MCF 10A (cell line): ENCODE measurements at regions of chr7 and their contacts with region 1.

Region 1: DNA sequence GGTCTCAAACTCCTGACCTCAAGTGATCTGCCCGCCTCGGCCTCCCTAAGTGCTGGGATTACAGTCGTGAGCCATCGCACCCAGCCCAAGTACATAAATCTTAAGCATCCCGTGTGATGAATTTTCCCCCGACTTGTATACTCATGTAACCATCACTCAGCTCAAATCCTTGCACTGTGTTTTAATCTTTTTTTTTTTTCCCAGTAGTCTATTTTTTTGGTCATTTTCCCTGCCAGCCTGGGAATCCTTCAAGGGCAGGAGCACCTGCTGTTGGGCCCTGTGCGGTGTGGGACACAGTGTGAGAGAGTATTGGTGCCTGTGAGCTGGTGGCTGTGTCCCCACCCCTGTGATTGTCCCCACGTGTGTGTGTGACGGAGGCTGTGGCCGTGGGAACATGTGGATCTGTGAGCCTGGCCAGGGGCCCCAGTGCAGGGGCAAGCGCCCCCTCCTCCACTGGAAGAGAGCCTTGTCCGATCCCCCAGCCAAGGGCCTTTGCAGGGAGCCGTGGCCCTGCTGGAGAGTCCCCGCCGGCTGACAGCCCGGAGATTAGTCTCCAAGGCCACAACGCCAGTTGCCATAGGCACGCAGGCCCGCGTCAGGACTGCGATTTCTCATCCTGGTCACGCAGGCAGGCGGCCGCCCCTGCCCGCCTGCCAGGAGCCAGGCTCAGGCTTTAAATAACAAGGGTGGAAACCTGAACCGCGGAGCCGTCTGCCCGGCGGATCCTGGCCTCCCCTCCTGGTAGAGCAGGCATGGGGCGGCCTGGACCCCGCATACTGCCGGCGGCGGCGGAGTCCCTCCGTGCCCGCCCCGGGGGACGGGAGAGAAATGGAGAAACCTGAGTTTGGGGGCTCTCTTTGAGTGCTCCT is 26.5 kb downstream of the GTF2IRD1 start:
- DNase-seq: peak; percentile 81
- H3K4me3 Mint-ChIP-seq: peak overlapping the region; percentile 72
- H3K27ac Mint-ChIP-seq: peak overlapping the region; percentile 98
- H3K4me1 Mint-ChIP-seq: peaks cover 56% of the 10 kb centered on the region
- H3K27me3 Mint-ChIP-seq: no peaks in the 10 kb centered on the region
- CTCF ChIP-seq: no peak

Region 2: GRCh38 chr7:74449809-74450397 is 30.3 kb before region 1 on chr7:
- CTCF ChIA-PET with region 1: interaction called, 3 read pairs
- POLR2A ChIA-PET with region 1: interaction called, 101 read pairs
- intact Hi-C with region 1: loop called (anchors 1 kb)
- DNase-seq: peak; percentile 71
- H3K4me3 Mint-ChIP-seq: no peak overlapping the region
- H3K27ac Mint-ChIP-seq: no peak overlapping the region
- H3K4me1 Mint-ChIP-seq: peaks cover 7% of the 10 kb centered on the region
- H3K27me3 Mint-ChIP-seq: no peaks in the 10 kb centered on the region
- CTCF ChIP-seq: peak; percentile 83

Region 3: DNA sequence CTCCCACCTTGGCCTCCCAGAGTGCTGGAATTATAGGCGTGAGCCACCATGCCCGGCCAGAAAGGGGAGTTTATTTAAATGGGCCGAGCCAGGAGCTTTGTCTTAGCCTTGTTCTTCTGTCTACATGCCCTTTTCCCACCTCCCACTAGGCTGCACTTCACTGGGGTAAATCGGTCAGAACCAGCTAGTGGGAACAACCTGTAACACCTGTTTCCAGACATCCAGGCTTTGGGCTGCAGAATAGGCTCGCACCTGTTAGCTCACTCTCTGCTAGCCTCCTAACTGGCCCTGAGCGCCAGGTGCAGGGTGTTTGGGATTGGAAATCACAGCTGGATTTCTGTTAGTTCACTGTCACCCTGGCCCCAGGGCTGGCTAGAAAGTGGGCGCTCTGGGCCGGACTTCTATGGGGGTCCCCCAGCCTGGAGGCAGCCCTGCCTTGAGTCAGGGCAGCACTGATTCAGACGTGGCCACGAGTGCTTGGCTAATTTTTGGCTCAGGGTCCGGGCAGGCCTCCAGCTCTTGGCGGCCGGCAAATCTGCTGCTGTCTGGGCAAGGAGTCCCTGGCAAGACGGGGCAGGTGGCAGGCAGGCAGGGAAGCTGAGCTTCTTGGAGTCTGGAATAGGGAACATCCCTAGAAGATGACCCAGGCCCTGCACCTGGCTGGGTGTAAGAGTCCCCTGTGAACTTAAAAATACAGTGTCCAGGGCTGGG is 22.1 kb after region 1 on chr7:
- CTCF ChIA-PET with region 1: interaction called, 4 read pairs
- POLR2A ChIA-PET with region 1: interaction called, 11 read pairs
- intact Hi-C with region 1: no loop called
- DNase-seq: peak; percentile 80
- H3K4me3 Mint-ChIP-seq: no peak overlapping the region
- H3K27ac Mint-ChIP-seq: peak overlapping the region; percentile 5
- H3K4me1 Mint-ChIP-seq: peaks cover 17% of the 10 kb centered on the region
- H3K27me3 Mint-ChIP-seq: no peaks in the 10 kb centered on the region
- CTCF ChIP-seq: no peak

Region 4: DNA sequence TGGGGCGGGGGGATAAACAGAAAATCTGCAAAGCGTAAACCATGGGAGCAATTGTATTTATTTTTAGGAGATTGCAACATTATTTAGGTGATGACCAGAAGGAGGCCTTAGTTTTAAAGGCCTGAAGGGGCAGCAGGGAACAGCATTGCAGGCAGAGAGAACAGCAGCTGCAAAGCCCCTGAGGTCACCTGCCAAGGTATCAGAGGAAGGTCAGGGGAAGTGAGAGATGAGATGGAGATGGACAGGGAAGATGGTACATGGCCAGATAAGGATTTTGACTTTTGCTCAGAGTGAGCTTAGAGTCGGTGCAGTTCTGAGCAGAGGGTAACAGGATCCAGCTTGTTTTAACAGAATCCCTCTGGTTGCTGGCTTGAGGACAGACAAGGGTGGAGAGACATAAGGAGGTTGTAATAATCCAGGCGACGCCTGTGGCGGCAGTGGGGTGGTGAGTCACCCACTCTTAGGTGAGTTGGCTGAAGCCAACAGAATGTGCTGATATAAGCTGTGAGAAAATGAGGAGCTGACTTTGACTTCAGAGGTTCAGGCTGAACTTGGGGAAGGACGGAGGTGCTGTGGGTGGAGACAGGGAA is 95.0 kb after region 1 on chr7:
- CTCF ChIA-PET with region 1: interaction called, 7 read pairs
- POLR2A ChIA-PET with region 1: interaction called, 13 read pairs
- intact Hi-C with region 1: no loop called
- DNase-seq: peak; percentile 94
- H3K4me3 Mint-ChIP-seq: peak overlapping the region; percentile 4
- H3K27ac Mint-ChIP-seq: peak overlapping the region; percentile 57
- H3K4me1 Mint-ChIP-seq: peaks cover 13% of the 10 kb centered on the region
- H3K27me3 Mint-ChIP-seq: no peaks in the 10 kb centered on the region
- CTCF ChIP-seq: no peak

Region 5: DNA sequence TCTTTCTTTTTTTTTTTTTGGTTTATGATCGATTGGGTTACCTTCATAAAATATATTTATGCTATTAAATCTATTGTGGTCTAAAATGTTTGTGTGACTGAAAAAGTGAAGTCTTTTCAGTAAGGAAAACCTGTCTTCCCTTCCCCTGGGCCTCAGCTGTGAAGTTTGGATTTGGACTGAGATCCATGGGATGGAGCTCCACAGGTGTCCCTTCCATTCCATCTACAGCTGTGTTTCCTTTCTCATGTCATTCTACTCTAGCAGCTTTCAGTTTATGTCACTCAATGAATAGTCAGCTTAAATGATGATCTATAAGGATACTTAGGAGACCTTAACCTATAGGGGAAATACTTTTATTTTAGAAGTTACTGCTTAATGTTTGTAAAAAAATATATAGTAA is 245.6 kb after region 1 on chr7:
- CTCF ChIA-PET with region 1: no interaction called
- POLR2A ChIA-PET with region 1: no interaction called
- intact Hi-C with region 1: no loop called
- DNase-seq: no peak
- H3K4me3 Mint-ChIP-seq: no peak overlapping the region
- H3K27ac Mint-ChIP-seq: no peak overlapping the region
- H3K4me1 Mint-ChIP-seq: no peaks in the 10 kb centered on the region
- H3K27me3 Mint-ChIP-seq: no peaks in the 10 kb centered on the region
- CTCF ChIP-seq: no peak